Cardiac septum (tissue), 1 donor: ENCODE measurements at regions of chr2 and their contacts with region 1.

Region 1: GRCh38 chr2:136572335-136572734 is 193.0 kb upstream of the THSD7B start:
- DNase-seq: peak; percentile 78

Region 2: DNA sequence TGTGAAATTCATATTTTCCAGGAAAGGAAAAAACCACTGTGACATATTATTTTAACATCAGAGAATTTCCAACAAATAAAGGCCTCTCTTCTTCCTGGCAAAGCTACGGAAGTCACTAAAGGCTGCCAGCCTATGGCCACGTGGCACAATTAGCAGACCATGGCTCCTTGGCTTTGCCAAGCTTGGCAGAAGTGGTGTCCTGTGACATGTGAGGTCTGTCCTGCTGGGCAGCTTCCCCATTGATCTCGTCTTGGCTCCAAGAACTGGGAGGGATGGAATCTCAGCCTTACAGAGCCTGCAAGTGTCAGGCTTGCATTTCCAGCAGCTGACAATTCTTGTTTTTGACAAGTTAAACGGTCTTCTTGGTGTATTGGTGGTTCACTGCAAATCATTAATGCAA is 33.8 kb before region 1 on chr2:
- intact Hi-C with region 1: loop called (anchors 2 kb)
- DNase-seq: no peak